Activated naive CD4-positive, alpha-beta T cell treated with anti-CD3 and anti-CD28 coated beads for 36 hours (primary cell): ENCODE measurements at regions of chr17 and their contacts with region 1.

Region 1: GRCh38 chr17:66466840-66467367 is 164.5 kb downstream of the PRKCA start:
- DNase-seq: peak; percentile 87
- H3K4me3 Mint-ChIP-seq: peak overlapping the region; percentile 45
- H3K27ac Mint-ChIP-seq: peak overlapping the region; percentile 90
- H3K4me1 Mint-ChIP-seq: peaks cover 75% of the 10 kb centered on the region
- H3K27me3 Mint-ChIP-seq: no peaks in the 10 kb centered on the region

Region 2: GRCh38 chr17:66397486-66397885 is 69.4 kb before region 1 on chr17:
- CTCF ChIA-PET with region 1: no interaction called
- intact Hi-C with region 1: loop called (anchors 1 kb)
- DNase-seq: peak; percentile 59
- H3K4me3 Mint-ChIP-seq: no peak overlapping the region
- H3K27ac Mint-ChIP-seq: peak overlapping the region; percentile 55
- H3K4me1 Mint-ChIP-seq: peaks cover 81% of the 10 kb centered on the region
- H3K27me3 Mint-ChIP-seq: no peaks in the 10 kb centered on the region

Region 3: DNA sequence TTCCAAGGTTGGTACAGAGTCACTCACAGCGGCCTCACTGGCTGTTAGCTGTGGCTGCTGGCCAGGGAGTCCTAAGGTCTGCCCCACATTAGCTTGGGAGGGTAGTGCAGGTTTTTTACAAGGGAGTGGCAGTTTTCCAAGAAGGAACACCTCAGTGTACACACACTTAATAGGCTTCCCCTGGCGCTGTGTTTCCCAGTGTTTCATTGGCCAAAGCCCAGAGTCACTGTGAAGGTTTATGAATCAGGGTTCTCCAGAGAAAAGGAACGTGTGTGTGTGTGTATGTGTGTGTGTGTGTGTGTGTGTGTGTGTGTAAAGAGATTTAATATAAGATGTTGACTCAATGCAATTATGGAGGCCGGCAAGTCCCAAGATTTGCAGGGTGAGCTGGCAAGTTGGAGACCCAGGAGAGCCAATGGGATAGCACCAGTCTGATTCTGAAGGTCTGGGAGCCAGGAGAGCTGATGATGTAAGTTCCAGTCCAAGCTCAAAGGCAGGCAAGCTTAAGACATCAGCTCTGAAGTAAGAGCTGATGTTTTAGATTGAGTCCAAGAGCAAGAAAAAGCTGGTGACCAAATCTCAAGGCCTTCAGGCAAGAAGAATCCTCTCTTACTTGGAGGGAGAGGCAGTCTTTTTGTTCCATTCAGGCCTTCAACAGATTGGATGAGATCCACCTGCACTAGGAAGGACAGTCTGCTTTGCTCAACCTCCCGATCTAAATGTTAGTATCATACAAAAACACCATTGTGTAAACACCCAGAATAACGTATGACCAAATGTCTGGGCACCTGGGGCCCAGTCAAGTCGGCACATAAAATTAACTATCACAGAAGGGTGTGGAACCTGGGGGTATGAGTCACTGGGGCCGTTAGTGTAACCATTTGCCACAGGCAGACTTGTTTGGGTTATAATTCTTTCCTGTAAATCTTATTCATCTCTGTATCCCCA is 42.3 kb after region 1 on chr17:
- CTCF ChIA-PET with region 1: interaction called, 3 read pairs
- intact Hi-C with region 1: loop called (anchors 1 kb)
- DNase-seq: peak; percentile 79
- H3K4me3 Mint-ChIP-seq: peak overlapping the region; percentile 39
- H3K27ac Mint-ChIP-seq: peak overlapping the region; percentile 90
- H3K4me1 Mint-ChIP-seq: peaks cover 85% of the 10 kb centered on the region
- H3K27me3 Mint-ChIP-seq: no peaks in the 10 kb centered on the region

Region 4: GRCh38 chr17:66633317-66633965 is 166.5 kb after region 1 on chr17:
- CTCF ChIA-PET with region 1: interaction called, 4 read pairs
- intact Hi-C with region 1: loop called (anchors 1 kb)
- DNase-seq: peak; percentile 78
- H3K4me3 Mint-ChIP-seq: no peak overlapping the region
- H3K27ac Mint-ChIP-seq: peak overlapping the region; percentile 44
- H3K4me1 Mint-ChIP-seq: peaks cover 62% of the 10 kb centered on the region
- H3K27me3 Mint-ChIP-seq: no peaks in the 10 kb centered on the region

Region 5: GRCh38 chr17:66673668-66674315 is 206.9 kb after region 1 on chr17:
- CTCF ChIA-PET with region 1: interaction called, 11 read pairs
- intact Hi-C with region 1: no loop called
- DNase-seq: peak; percentile 72
- H3K4me3 Mint-ChIP-seq: peak overlapping the region; percentile 20
- H3K27ac Mint-ChIP-seq: peak overlapping the region; percentile 88
- H3K4me1 Mint-ChIP-seq: peaks cover 77% of the 10 kb centered on the region
- H3K27me3 Mint-ChIP-seq: no peaks in the 10 kb centered on the region